ENCODE measurements at regions of chr4 and their contacts with region 1.

Region 1: GRCh38 chr4:2763511-2763967 is 7.4 kb upstream of the TNIP2 start:
- DNase-seq: peak; percentile 45
- ATAC-seq: no peak; the same call in 1 of the 2 replicates
- H3K4me3 Mint-ChIP-seq: peak overlapping the region; percentile 45
- H3K27ac Mint-ChIP-seq: no peak overlapping the region
- H3K4me1 Mint-ChIP-seq: peaks cover 16% of the 10 kb centered on the region
- H3K27me3 Mint-ChIP-seq: peaks cover 6% of the 10 kb centered on the region; the same call in 1 of the 2 replicates
- CTCF ChIP-seq: no peak

Region 2: DNA sequence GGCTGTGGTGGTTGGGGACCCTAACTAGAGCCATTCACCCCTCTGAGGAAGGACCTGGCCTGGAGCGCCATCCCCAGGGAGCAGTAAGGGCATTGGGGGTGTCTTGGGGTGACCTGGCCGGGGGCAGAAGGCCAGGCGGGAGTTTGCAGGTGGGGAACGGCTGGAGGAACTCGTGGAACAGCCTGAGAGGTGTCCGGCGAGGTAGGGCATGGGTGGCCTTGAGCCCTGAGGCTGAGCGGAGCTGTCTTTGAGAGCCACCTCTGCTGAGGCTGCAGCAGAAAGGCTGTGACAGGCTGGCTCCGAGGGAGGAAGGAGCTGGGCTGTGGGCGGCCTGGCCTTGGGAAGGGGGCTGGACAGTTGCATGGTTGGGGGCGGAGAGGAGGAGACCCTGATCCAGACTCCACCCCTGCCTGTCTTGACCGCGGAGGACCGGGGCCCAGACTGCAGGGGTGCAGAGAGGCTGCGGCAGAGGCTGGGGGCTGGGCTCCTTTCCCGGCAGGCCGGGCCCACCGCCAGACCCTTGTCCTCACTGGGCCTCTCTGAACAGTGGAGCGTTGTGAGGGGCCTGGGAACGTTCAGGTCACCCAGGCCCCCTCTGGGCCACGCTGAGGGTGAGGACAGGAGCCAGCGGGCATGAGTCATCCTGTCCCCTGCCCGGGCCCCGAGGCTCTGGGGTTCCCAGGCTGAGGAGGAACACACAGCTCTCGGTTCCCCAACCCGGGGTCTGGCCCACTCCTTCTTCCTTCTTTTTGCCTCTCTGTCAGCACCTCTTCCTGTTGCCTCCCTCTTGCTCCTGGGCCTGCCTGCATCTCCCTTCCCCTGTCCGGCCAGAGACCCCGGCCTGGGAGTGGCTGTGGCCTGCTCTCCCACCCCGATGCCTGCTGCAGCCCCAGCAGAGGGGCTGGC is 37.4 kb after region 1 on chr4:
- CTCF ChIA-PET with region 1: interaction called, 10 read pairs
- POLR2A ChIA-PET with region 1: no interaction called
- DNase-seq: peak; percentile 79
- ATAC-seq: peak; percentile 92
- H3K4me3 Mint-ChIP-seq: no peak overlapping the region
- H3K27ac Mint-ChIP-seq: peak overlapping the region; percentile 76
- H3K4me1 Mint-ChIP-seq: peaks cover 18% of the 10 kb centered on the region
- H3K27me3 Mint-ChIP-seq: no peaks in the 10 kb centered on the region; the same call in 1 of the 2 replicates
- CTCF ChIP-seq: no peak

Region 3: GRCh38 chr4:2817701-2818350 is 54.3 kb after region 1 on chr4:
- CTCF ChIA-PET with region 1: interaction called, 17 read pairs
- POLR2A ChIA-PET with region 1: no interaction called
- DNase-seq: peak; percentile 65
- ATAC-seq: peak; percentile 66
- H3K4me3 Mint-ChIP-seq: peak overlapping the region; percentile 68
- H3K27ac Mint-ChIP-seq: no peak overlapping the region
- H3K4me1 Mint-ChIP-seq: peaks cover 22% of the 10 kb centered on the region
- H3K27me3 Mint-ChIP-seq: peaks cover 10% of the 10 kb centered on the region
- CTCF ChIP-seq: no peak

Region 4: DNA sequence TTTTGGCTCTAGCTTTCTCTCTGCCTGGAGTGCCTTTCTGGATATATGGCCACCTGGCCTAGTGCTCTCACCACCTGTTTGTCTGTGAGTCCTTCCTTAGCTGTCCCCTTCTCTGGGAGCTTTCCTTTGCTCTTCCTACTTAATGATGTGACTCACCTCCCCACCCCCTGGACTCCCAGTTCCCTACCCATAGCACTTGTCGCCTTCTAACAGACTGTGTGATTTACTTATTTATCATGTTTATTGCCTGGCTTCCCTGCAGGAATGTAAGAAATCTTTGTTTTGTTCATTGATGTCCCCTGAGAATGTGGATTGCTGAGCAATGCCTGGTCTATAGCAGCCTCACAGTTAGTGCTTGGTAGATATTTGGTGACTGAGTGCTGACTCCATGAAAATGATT is 99.0 kb after region 1 on chr4:
- CTCF ChIA-PET with region 1: interaction called, 13 read pairs
- POLR2A ChIA-PET with region 1: no interaction called
- DNase-seq: no peak
- ATAC-seq: peak; percentile 75
- H3K4me3 Mint-ChIP-seq: peak overlapping the region; percentile 20; the same call in 1 of the 2 replicates
- H3K27ac Mint-ChIP-seq: peak overlapping the region; percentile 90
- H3K4me1 Mint-ChIP-seq: peaks cover 74% of the 10 kb centered on the region
- H3K27me3 Mint-ChIP-seq: no peaks in the 10 kb centered on the region
- CTCF ChIP-seq: no peak

Region 5: DNA sequence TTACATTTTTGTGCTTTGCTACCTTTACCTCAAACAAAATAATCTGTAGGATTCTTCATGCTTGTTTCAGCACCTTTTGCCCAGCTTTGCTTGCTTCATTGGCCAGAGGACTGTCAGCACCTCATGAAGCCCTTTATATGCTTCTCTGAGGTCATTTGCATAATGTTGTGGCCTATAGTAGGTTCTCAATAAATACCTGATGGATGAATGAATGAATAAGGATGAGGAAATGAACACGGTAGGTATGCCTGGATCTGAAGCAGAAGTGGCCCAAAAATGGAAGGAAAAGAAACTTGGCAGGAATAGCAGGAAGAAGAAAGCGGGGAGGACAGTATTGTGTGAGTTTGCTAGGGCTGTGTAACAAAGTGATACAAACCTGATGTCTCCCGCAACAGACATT is 207.7 kb after region 1 on chr4:
- CTCF ChIA-PET with region 1: no interaction called
- POLR2A ChIA-PET with region 1: no interaction called
- DNase-seq: no peak
- ATAC-seq: no peak
- H3K4me3 Mint-ChIP-seq: no peak overlapping the region
- H3K27ac Mint-ChIP-seq: no peak overlapping the region
- H3K4me1 Mint-ChIP-seq: peaks cover 3% of the 10 kb centered on the region; the same call in 1 of the 2 replicates
- H3K27me3 Mint-ChIP-seq: no peaks in the 10 kb centered on the region
- CTCF ChIP-seq: no peak